ENCODE measurements at regions of chr19 and their contacts with region 1.

Region 1: DNA sequence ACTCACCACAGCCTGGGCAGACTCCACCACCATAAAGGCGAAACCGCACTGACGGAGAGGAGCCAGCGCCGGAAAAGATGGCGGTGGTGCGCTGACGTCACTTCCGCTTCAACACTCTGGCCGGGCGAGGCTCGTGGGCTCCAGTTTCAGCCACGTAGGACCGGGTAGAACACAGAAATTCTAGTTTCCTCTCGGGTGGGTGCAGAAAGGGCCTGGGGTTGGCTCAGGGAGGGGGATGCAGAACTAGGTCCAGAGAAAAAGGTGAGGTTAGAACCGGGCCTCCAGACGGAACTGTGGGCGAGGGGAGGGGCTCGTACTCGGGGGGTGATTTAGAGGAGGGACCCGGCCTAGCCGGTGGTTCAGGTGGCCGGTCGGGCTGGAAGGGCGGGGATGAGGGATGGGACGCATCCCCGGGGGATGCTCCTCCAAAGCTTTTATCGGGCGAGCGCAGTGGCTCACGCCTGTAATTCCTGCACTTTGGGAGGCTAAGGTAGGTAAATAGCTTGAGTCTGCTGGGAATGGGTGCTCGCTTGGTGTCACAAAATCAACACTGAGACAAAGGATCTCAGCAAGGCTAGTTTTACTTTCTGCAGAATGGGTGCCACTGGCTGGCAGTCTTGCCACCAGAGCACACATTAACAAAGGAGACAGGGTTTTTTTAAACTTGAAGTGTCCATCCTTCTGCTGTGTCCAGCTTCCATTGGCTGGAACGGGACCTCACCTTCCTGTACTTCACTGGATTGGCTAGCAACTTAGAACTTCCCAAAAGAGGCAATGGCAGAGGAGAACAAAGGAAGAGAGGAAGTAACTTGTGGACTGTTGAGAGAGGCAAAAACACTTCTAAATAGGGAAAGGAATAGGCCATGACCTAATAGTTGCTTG is at the start of gene ZNF561:
- DNase-seq: peak; percentile 73
- H3K4me3 Mint-ChIP-seq: peak within 1 kb of the TSS; percentile 91
- H3K27ac Mint-ChIP-seq: peak within 1 kb of the TSS; percentile 100
- H3K4me1 Mint-ChIP-seq: peaks cover 14% of the 10 kb centered on the region
- H3K27me3 Mint-ChIP-seq: no peaks in the 10 kb centered on the region
- CTCF ChIP-seq: no peak
- total RNA-seq, gene ZNF561: 26.0 and 27.3 TPM in 2 replicates

Region 2: DNA sequence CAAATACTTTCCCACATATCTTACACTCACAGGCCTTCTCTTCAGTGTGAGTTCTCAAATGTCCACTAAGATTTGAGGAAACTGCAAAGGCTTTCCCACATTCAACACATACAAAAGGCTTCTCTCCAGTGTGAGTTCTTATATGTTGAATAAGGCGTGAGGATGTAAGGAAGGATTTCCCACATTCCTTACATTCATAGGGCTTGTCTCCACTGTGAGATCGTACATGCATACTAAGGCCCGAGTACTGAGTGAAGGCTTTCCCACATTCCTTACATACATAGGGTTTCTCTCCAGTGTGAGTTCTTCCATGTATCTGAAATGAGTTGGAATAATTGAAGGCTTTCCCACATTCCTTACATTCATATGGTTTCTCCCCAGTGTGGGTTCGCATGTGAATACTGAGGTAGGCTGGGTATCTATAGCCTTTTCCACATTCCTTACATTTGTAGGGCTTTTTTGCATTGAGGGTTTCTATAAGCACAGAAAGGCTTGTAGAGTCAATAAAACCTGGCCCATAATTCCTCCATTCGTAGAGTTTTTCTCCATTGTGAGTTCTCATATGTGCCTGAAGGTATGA is 92.5 kb before region 1 on chr19:
- CTCF ChIA-PET with region 1: no interaction called
- intact Hi-C with region 1: no loop called
- DNase-seq: no peak
- H3K4me3 Mint-ChIP-seq: no peak overlapping the region
- H3K27ac Mint-ChIP-seq: no peak overlapping the region
- H3K4me1 Mint-ChIP-seq: no peaks in the 10 kb centered on the region
- H3K27me3 Mint-ChIP-seq: no peaks in the 10 kb centered on the region
- CTCF ChIP-seq: no peak

Region 3: GRCh38 chr19:9584073-9584833 is 37.1 kb before region 1 on chr19 and contains the start of gene ZNF121:
- CTCF ChIA-PET with region 1: interaction called, 3 read pairs
- intact Hi-C with region 1: loop called (anchors 5 kb)
- DNase-seq: peak; percentile 77
- H3K4me3 Mint-ChIP-seq: peak within 1 kb of the TSS; percentile 83
- H3K27ac Mint-ChIP-seq: peak within 1 kb of the TSS; percentile 93
- H3K4me1 Mint-ChIP-seq: peaks cover 17% of the 10 kb centered on the region
- H3K27me3 Mint-ChIP-seq: no peaks in the 10 kb centered on the region
- CTCF ChIP-seq: no peak
- total RNA-seq, gene ZNF121: 61.1 and 66.2 TPM in 2 replicates

Region 4: DNA sequence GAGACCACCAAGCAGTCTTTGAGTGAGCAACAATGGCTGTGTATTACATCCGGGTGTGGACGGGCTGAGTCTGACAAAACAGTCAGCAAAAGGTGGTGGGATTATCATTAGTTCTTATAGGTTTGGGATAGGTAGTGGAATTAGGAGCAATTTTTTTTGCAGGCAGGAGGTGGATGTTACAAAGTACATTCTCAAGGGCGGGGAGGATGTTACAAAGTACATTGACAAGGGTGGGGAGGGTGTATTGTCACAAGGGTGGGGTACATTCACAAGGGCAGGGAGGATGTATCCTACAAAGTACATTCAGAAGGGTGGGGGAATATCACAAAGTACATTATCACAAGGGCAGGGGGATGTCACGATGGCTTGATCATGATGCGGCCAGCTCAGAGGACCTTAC is 14.6 kb after region 1 on chr19:
- CTCF ChIA-PET with region 1: no interaction called
- intact Hi-C with region 1: no loop called
- DNase-seq: no peak
- H3K4me3 Mint-ChIP-seq: no peak overlapping the region
- H3K27ac Mint-ChIP-seq: no peak overlapping the region
- H3K4me1 Mint-ChIP-seq: peaks cover 8% of the 10 kb centered on the region
- H3K27me3 Mint-ChIP-seq: no peaks in the 10 kb centered on the region
- CTCF ChIP-seq: no peak

Region 5: GRCh38 chr19:9785367-9786331 is 164.3 kb after region 1 on chr19:
- CTCF ChIA-PET with region 1: interaction called, 3 read pairs
- intact Hi-C with region 1: loop called (anchors 1 kb)
- DNase-seq: peak; percentile 96
- H3K4me3 Mint-ChIP-seq: peak overlapping the region; percentile 82
- H3K27ac Mint-ChIP-seq: peak overlapping the region; percentile 99
- H3K4me1 Mint-ChIP-seq: peaks cover 24% of the 10 kb centered on the region
- H3K27me3 Mint-ChIP-seq: no peaks in the 10 kb centered on the region
- CTCF ChIP-seq: no peak

Measured in Calu3 (cell line).